MCF 10A (cell line): ENCODE measurements at regions of chr20 and their contacts with region 1.

Region 1: GRCh38 chr20:35284267-35284991 is at the start of gene EIF6:
- DNase-seq: peak; percentile 86
- H3K4me3 Mint-ChIP-seq: peak within 1 kb of the TSS; percentile 89
- H3K27ac Mint-ChIP-seq: peak within 1 kb of the TSS; percentile 90
- H3K4me1 Mint-ChIP-seq: peaks cover 25% of the 10 kb centered on the region
- H3K27me3 Mint-ChIP-seq: no peaks in the 10 kb centered on the region
- CTCF ChIP-seq: no peak
- total RNA-seq, gene EIF6: 322 and 354 TPM in 2 replicates

Region 2: GRCh38 chr20:33963751-33964150 is 1320.7 kb before region 1 on chr20:
- CTCF ChIA-PET with region 1: no interaction called
- POLR2A ChIA-PET with region 1: no interaction called
- intact Hi-C with region 1: no loop called
- DNase-seq: no peak
- H3K4me3 Mint-ChIP-seq: no peak overlapping the region
- H3K27ac Mint-ChIP-seq: no peak overlapping the region
- H3K4me1 Mint-ChIP-seq: no peaks in the 10 kb centered on the region
- H3K27me3 Mint-ChIP-seq: no peaks in the 10 kb centered on the region
- CTCF ChIP-seq: no peak

Region 3: GRCh38 chr20:35297155-35297554 is 12.7 kb after region 1 on chr20:
- CTCF ChIA-PET with region 1: interaction called, 55 read pairs
- POLR2A ChIA-PET with region 1: interaction called, 121 read pairs
- intact Hi-C with region 1: no loop called
- DNase-seq: no peak
- H3K4me3 Mint-ChIP-seq: no peak overlapping the region
- H3K27ac Mint-ChIP-seq: no peak overlapping the region
- H3K4me1 Mint-ChIP-seq: peaks cover 13% of the 10 kb centered on the region
- H3K27me3 Mint-ChIP-seq: no peaks in the 10 kb centered on the region
- CTCF ChIP-seq: no peak